A673 (cell line): ENCODE measurements at regions of chr1 and their contacts with region 1.

Region 1: DNA sequence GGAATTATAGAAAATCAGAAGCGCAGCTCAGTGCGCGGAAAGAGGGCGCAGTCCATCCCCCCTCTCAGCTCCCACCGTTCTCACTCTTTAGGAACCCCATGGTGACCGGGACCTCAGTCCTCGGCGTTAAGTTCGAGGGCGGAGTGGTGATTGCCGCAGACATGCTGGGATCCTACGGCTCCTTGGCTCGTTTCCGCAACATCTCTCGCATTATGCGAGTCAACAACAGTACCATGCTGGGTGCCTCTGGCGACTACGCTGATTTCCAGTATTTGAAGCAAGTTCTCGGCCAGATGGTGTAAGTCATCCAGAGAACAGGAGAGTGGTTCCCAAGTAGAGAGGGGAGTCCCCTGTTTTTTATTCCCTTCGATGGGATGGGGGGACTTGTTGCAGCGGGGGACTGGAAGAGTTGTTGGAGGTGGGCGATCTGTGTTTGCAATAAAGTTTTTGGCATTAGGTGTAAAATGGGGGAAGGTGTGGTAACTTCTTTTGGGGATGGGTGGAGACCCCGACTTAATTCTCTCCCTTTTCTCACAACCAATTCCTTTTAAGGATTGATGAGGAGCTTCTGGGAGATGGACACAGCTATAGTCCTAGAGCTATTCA is 620 bp downstream of the PSMB4 start:
- DNase-seq: peak; percentile 42
- H3K4me3 ChIP-seq: peak overlapping the region; percentile 96
- H3K27ac ChIP-seq: peak overlapping the region; percentile 94
- H3K4me1 ChIP-seq: peaks cover 8% of the 10 kb centered on the region
- H3K27me3 ChIP-seq: no peaks in the 10 kb centered on the region
- CTCF ChIP-seq: no peak

Region 2: DNA sequence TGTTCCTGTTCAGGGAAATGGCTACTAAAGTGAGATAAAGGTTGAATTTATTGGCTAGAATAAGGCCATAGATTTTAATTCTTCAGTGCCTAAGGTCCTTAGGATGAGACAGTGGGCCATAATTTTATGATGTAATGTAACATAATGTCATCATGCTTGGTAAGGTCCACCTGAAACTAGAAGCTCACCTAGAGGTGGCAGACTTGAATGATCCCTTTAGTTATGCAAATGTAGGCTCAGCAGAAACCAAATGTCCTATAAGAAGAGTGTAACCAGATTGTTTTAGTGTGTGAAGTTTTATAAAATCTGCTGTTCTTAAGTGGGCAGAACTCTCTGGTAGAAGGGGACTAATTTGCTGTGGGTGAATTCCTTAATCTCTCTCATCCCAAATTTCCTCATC is 487.4 kb before region 1 on chr1:
- CTCF ChIA-PET with region 1: no interaction called
- POLR2A ChIA-PET with region 1: no interaction called
- intact Hi-C with region 1: no loop called
- DNase-seq: no peak
- H3K4me3 ChIP-seq: no peak overlapping the region
- H3K27ac ChIP-seq: no peak overlapping the region
- H3K4me1 ChIP-seq: no peaks in the 10 kb centered on the region
- H3K27me3 ChIP-seq: no peaks in the 10 kb centered on the region
- CTCF ChIP-seq: no peak

Region 3: GRCh38 chr1:151024540-151025146 is 375.4 kb before region 1 on chr1:
- CTCF ChIA-PET with region 1: interaction called, 10 read pairs
- POLR2A ChIA-PET with region 1: no interaction called
- intact Hi-C with region 1: no loop called
- DNase-seq: peak; percentile 84
- H3K4me3 ChIP-seq: no peak overlapping the region
- H3K27ac ChIP-seq: no peak overlapping the region
- H3K4me1 ChIP-seq: peaks cover 6% of the 10 kb centered on the region
- H3K27me3 ChIP-seq: no peaks in the 10 kb centered on the region
- CTCF ChIP-seq: peak; percentile 88

Region 4: DNA sequence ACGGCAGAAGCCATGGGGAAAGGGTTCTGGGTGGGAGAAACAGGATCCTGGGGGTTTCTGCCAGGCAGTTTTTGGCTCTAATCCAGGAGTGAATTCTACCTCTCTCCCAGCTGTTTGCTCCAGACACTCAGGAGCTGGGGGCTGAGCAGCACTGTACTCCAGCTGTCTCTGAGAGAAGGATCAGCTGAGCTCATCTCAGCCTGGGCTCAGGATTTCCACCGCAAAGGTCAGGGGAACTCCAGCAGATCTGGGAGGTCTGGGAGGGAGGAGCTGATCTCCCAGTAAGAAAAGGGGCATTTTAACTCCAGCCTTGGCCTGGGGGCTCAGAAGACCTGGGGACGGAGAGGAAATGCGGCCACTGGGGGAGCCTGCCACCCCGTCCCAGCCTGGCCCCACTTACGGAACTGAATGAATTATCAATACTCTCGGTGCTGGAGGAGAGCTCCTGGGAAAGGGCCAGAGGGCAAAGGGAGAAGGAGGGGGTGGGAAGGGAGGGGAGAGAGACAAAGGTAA is 90.1 kb before region 1 on chr1:
- CTCF ChIA-PET with region 1: no interaction called
- POLR2A ChIA-PET with region 1: no interaction called
- intact Hi-C with region 1: loop called (anchors 10 kb)
- DNase-seq: no peak
- H3K4me3 ChIP-seq: no peak overlapping the region
- H3K27ac ChIP-seq: no peak overlapping the region
- H3K4me1 ChIP-seq: no peaks in the 10 kb centered on the region
- H3K27me3 ChIP-seq: no peaks in the 10 kb centered on the region
- CTCF ChIP-seq: no peak

Region 5: GRCh38 chr1:151346769-151347522 is 53.0 kb before region 1 on chr1 and contains the start of gene RFX5:
- CTCF ChIA-PET with region 1: no interaction called
- POLR2A ChIA-PET with region 1: no interaction called
- intact Hi-C with region 1: loop called (anchors 5 kb)
- DNase-seq: peak; percentile 99
- H3K4me3 ChIP-seq: peak within 1 kb of the TSS; percentile 49
- H3K27ac ChIP-seq: peak within 1 kb of the TSS; percentile 80
- H3K4me1 ChIP-seq: peaks cover 9% of the 10 kb centered on the region
- H3K27me3 ChIP-seq: no peaks in the 10 kb centered on the region
- CTCF ChIP-seq: no peak
- total RNA-seq, gene RFX5: 49.0 and 51.8 TPM in 2 replicates